A549 (cell line): ENCODE measurements at regions of chr17 and their contacts with region 1.

Region 1: GRCh38 chr17:30124273-30124796 is 7.7 kb downstream of the NSRP1 start:
- DNase-seq: no peak
- ATAC-seq: peak in 1 of 2 experiments; percentile 55; a peak in 3 of 6 replicates
- H3K4me3 ChIP-seq: no peak overlapping the region
- H3K27ac ChIP-seq: no peak overlapping the region
- H3K4me1 ChIP-seq: peaks cover 13% of the 10 kb centered on the region; the same call in 2 of the 3 replicates
- CTCF ChIP-seq: no peak
- EP300 ChIP-seq: no peak
- POLR2A ChIP-seq: no peak
- RAD21 ChIP-seq: no peak

Region 2: GRCh38 chr17:29376667-29377270 is 747.6 kb before region 1 on chr17:
- CTCF ChIA-PET with region 1: no interaction called
- POLR2A ChIA-PET with region 1: no interaction called
- DNase-seq: peak; percentile 55 to 76
- ATAC-seq: peak; percentile 94 to 97
- H3K4me3 ChIP-seq: no peak overlapping the region
- H3K27ac ChIP-seq: peak overlapping the region in 1 of 2 experiments; percentile 77; a peak in 3 of 6 replicates
- H3K4me1 ChIP-seq: peaks cover 43% of the 10 kb centered on the region
- CTCF ChIP-seq: no peak
- EP300 ChIP-seq: no peak
- POLR2A ChIP-seq: no peak
- RAD21 ChIP-seq: no peak

Region 3: DNA sequence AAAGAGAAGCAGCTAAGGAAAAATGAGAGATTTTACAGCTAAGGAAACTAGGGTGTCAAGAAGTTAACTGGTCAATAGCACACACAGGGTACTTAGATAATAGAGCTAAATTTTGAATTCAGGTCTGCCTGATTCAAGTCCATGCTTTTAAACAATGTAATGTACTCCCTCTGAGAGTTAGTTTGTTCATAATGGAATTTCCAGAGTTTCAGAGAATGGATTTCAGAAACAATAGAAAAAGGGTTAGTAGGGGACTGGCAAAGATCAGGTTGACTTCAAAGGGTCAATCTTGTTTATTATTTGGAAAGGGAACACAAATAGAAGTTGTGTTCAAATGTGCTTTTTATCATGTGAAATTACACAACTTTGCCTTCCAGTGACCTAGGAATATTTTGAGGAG is 10.2 kb after region 1 on chr17:
- CTCF ChIA-PET with region 1: interaction called, 40 read pairs
- POLR2A ChIA-PET with region 1: no interaction called
- DNase-seq: no peak
- ATAC-seq: no peak
- H3K4me3 ChIP-seq: no peak overlapping the region
- H3K27ac ChIP-seq: no peak overlapping the region
- H3K4me1 ChIP-seq: 0 out of 3 replicates have a peak, but pooled peaks cover 4% of the 10 kb centered on the region
- CTCF ChIP-seq: no peak
- EP300 ChIP-seq: no peak
- POLR2A ChIP-seq: no peak
- RAD21 ChIP-seq: no peak

Region 4: DNA sequence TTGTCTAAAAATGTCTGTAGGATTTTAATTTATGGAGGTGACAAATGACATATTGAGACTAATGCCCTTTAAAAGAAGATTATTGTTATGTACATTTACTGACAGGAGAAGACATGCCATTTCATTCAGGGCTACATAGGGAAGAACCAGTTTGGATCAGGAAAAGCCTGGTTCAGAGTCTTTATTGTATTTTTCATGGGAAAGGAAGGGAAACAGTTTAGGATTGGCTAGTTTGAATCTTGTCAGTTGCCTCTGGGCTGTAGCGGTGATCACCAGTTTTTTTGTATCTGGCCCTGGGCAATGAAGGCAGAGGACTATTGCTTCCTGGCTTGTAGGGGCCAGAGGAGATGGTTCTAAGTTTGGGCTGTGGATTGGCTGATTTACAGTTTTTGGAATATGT is 24.0 kb after region 1 on chr17:
- CTCF ChIA-PET with region 1: interaction called, 24 read pairs
- POLR2A ChIA-PET with region 1: no interaction called
- DNase-seq: no peak
- ATAC-seq: no peak; a peak in 1 of 6 replicates
- H3K4me3 ChIP-seq: no peak overlapping the region
- H3K27ac ChIP-seq: no peak overlapping the region
- H3K4me1 ChIP-seq: peaks cover 7% of the 10 kb centered on the region
- CTCF ChIP-seq: no peak
- EP300 ChIP-seq: no peak
- POLR2A ChIP-seq: no peak
- RAD21 ChIP-seq: no peak

Region 5: GRCh38 chr17:30161601-30162000 is 37.3 kb after region 1 on chr17:
- CTCF ChIA-PET with region 1: interaction called, 17 read pairs
- POLR2A ChIA-PET with region 1: no interaction called
- DNase-seq: no peak
- ATAC-seq: no peak
- H3K4me3 ChIP-seq: no peak overlapping the region
- H3K27ac ChIP-seq: no peak overlapping the region
- H3K4me1 ChIP-seq: peaks cover 8% of the 10 kb centered on the region; the same call in 1 of the 3 replicates
- CTCF ChIP-seq: no peak
- EP300 ChIP-seq: no peak
- POLR2A ChIP-seq: no peak
- RAD21 ChIP-seq: no peak

Region 6: GRCh38 chr17:30236766-30237165 is 112.4 kb after region 1 on chr17:
- CTCF ChIA-PET with region 1: interaction called, 103 read pairs
- POLR2A ChIA-PET with region 1: interaction called, 3 read pairs
- DNase-seq: peak; percentile 70 to 91
- ATAC-seq: peak; percentile 82 to 91
- H3K4me3 ChIP-seq: peak overlapping the region; percentile 57; the same call in 2 of the 3 replicates
- H3K27ac ChIP-seq: peak overlapping the region in 1 of 2 experiments; percentile 48; a peak in 1 of 6 replicates
- H3K4me1 ChIP-seq: peaks cover 13% of the 10 kb centered on the region
- CTCF ChIP-seq: peak; percentile 64
- EP300 ChIP-seq: no peak
- POLR2A ChIP-seq: no peak
- RAD21 ChIP-seq: peak; percentile 75 to 82

Region 7: GRCh38 chr17:30278032-30278431 is 153.7 kb after region 1 on chr17:
- CTCF ChIA-PET with region 1: interaction called, 39 read pairs
- POLR2A ChIA-PET with region 1: no interaction called
- DNase-seq: peak; percentile 31 to 65
- ATAC-seq: peak; percentile 84 to 85
- H3K4me3 ChIP-seq: no peak overlapping the region
- H3K27ac ChIP-seq: no peak overlapping the region
- H3K4me1 ChIP-seq: no peaks in the 10 kb centered on the region
- CTCF ChIP-seq: peak; percentile 56
- EP300 ChIP-seq: no peak
- POLR2A ChIP-seq: no peak
- RAD21 ChIP-seq: peak; percentile 64 to 67

Region 8: GRCh38 chr17:30323895-30324319 is 199.6 kb after region 1 on chr17:
- CTCF ChIA-PET with region 1: interaction called, 14 read pairs
- POLR2A ChIA-PET with region 1: no interaction called
- DNase-seq: peak in 1 of 2 experiments; percentile 43
- ATAC-seq: peak; percentile 49 to 68
- H3K4me3 ChIP-seq: no peak overlapping the region
- H3K27ac ChIP-seq: peak overlapping the region; percentile 33 to 48; a peak in 4 of 6 replicates
- H3K4me1 ChIP-seq: peaks cover 30% of the 10 kb centered on the region
- CTCF ChIP-seq: no peak
- EP300 ChIP-seq: no peak
- POLR2A ChIP-seq: no peak
- RAD21 ChIP-seq: no peak